ENCODE measurements at regions of chrX and their contacts with region 1.

Region 1: GRCh38 chrX:107672955-107673378 is 44.7 kb downstream of the PRPS1 start:
- DNase-seq: peak; percentile 83
- H3K4me3 ChIP-seq: peak overlapping the region; percentile 88
- H3K27ac ChIP-seq: peak overlapping the region; percentile 89
- H3K4me1 ChIP-seq: peaks cover 45% of the 10 kb centered on the region
- CTCF ChIP-seq: peak; percentile 73

Region 2: DNA sequence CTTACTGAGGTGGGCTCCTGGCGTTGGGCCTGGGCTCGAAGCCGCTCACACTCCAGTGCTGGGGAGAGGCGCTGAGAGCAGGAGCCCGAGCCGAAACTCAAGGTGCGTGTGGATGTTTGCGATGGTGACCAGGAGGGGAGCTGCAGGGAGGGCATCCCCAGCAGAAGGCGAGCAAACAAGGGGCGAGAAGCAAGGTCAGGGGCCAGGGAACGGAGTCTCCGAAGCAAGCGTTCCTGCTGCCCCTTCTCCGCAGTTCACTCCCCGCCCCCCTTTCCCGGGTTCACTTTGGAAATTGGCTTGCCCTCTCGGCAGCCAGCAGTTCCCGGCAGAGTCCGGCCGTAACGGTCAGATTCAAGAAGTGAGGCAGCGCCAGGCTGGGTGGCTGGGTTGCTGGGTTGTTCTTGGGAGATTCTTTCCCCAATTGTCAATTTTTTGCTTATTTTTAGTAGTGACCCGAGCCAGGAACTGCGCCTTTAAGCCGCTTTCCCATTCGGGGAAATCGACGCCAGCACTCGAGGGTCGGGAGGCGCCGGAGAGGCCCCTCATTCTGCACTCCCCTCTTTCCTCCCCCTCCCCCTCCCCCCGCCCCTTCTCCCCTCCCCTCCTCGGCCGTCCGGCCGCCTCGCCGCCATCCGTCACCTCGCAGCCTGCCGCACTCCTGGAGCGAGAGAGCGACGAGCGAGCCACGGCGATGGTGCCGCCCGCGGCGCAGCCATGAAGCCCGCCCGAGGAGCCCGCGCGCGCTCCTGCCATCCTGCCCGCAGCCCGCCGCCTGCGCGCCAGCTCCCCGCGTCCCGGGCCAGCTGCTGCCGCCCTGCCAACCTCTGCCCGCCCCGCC is 223.8 kb before region 1 on chrX and contains the start of gene FRMPD3:
- CTCF ChIA-PET with region 1: no interaction called
- POLR2A ChIA-PET with region 1: no interaction called
- intact Hi-C with region 1: loop called (anchors 2 kb)
- DNase-seq: peak; percentile 70
- H3K4me3 ChIP-seq: peak within 1 kb of the TSS; percentile 73
- H3K27ac ChIP-seq: peak within 1 kb of the TSS; percentile 86
- H3K4me1 ChIP-seq: peaks cover 71% of the 10 kb centered on the region
- CTCF ChIP-seq: no peak; the same call in 1 of the 2 replicates
- total RNA-seq, gene FRMPD3: 5.8 and 6.5 TPM in 2 replicates

Region 3: DNA sequence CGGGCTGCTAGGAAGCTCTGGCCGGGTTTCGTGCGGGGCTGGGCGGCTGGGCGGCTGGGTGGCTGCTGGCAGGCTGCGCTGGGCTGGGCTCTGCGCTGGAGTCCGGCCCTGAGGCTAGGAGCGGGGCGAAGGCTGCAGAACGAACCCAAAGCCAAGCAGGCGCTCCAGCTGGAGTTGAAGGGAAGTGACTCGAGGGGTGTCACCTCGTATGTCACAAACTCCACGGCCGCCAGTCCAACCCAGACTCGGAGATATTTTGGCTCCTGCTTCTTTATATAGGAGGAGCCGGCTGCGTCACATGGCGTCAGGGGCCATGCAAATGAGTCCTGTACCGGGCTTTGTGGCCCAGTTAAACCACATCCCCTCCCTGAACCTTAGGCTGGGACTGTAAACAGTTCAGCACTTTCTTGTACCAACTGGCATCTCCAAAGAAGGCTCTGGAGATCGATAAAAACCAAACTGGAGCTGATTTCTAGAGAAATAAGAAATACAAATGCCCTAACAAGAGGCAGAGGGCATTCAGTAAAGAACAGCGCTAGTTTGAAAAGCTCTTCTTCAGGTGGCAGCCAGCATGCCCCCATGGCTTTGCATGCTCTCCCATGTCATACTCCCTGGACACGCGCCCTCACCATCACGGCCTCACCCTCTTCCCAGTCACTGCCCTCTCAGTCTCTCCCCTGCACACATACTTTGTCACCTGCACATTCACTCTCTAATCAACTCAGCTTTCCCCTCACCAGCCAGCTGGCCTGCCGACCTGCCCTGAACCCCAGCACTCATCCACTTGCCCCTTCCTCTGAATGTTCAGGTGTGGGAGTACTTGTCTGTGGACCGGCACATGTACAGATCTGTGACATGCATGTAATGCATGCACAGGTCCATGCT is 44.1 kb after region 1 on chrX:
- CTCF ChIA-PET with region 1: interaction called, 19 read pairs
- POLR2A ChIA-PET with region 1: interaction called, 121 read pairs
- intact Hi-C with region 1: loop called (anchors 1 kb)
- DNase-seq: peak; percentile 87
- H3K4me3 ChIP-seq: peak overlapping the region; percentile 91
- H3K27ac ChIP-seq: peak overlapping the region; percentile 85
- H3K4me1 ChIP-seq: peaks cover 59% of the 10 kb centered on the region
- CTCF ChIP-seq: no peak

Region 4: DNA sequence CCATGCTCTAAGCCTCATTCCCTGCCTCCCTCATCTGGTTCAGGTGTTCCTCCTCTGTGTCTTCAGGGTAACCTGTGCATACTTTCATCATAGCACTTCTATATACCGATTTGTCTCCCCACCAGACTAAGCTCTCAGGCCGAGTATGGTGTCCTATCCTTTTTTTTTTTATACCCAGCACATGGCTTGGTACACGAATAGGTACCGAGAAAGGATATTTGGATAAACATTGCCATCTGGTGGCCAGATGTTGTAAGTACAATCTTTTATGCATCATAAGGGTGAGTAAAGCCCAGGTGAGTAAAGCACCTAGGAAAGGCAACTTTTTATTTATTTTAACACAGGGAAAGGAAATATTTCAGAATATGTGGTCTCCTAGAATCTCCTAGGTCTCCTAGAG is 221.1 kb after region 1 on chrX:
- CTCF ChIA-PET with region 1: no interaction called
- POLR2A ChIA-PET with region 1: no interaction called
- intact Hi-C with region 1: loop called (anchors 5 kb)
- DNase-seq: peak; percentile 65
- H3K4me3 ChIP-seq: no peak overlapping the region
- H3K27ac ChIP-seq: no peak overlapping the region
- H3K4me1 ChIP-seq: no peaks in the 10 kb centered on the region
- CTCF ChIP-seq: peak; percentile 77

Measured in OCI-LY7 (cell line).